ENCODE measurements at regions of chr16 and their contacts with region 1.

Region 1: DNA sequence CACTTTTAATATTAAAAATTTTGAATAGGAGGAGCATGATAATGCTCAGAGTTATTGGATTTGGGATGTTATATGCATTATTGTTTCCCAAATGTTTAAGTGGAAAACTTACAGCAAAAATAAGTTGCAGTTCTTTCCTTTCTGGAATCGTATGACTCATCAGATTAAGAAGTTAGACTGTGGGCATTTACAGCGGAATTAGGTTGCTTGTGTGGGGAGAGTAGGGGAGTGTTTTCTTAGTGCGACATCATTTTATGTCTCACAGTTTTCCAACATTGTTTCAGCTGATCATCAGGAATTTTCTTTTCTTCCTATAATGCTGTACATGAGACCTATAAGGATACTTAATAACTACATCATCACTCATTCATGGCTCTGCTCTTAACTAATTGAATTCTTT is 1631.8 kb downstream of the CDH8 start:
- DNase-seq: no peak
- H3K4me3 ChIP-seq: no peak overlapping the region
- H3K27ac ChIP-seq: no peak overlapping the region
- H3K4me1 ChIP-seq: no peaks in the 10 kb centered on the region
- H3K27me3 ChIP-seq: no peaks in the 10 kb centered on the region
- CTCF ChIP-seq: no peak
- EP300 ChIP-seq: no peak
- POLR2A ChIP-seq: no peak

Region 2: DNA sequence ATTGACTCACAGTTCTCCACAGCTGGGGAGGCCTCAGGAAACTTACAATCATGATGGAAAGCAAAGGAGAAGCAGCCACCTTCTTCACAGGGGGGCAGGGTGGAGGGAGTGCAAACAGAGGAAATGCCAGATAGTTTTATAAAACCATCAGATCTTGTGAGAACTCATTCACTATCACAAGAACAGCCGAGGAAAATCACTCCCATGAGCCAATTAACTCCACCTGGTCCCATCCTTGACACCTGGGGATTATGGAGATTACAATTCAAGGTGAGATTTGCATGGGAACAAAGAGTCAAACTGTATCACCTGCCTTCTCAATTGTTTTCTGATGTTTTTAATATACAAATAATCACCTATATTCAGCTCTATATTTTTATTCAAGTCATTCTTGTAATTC is 143.0 kb before region 1 on chr16:
- in situ Hi-C with region 1: no loop called
- intact Hi-C with region 1: no loop called
- DNase-seq: no peak
- H3K4me3 ChIP-seq: no peak overlapping the region
- H3K27ac ChIP-seq: no peak overlapping the region
- H3K4me1 ChIP-seq: no peaks in the 10 kb centered on the region
- H3K27me3 ChIP-seq: no peaks in the 10 kb centered on the region
- CTCF ChIP-seq: no peak
- EP300 ChIP-seq: no peak
- POLR2A ChIP-seq: no peak

Region 3: DNA sequence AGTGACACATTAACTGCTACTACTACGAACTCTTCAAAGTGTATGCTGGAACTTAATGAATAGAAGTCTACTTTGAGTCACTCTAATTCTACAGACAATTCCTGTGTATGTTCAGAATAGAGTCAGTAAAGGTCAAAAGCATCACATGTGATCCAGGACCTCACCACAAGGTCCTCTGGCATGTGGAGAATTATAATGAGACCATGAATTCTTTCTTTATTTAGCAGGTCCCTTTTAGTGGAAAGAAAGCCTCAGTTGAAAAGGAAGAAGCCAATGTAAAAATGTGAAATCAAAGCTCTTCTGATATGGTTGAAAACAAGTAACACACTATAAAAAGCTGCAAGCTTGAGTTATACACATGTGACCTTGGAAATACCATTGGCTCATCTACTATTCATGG is 58.1 kb before region 1 on chr16:
- in situ Hi-C with region 1: no loop called
- intact Hi-C with region 1: no loop called
- DNase-seq: no peak
- H3K4me3 ChIP-seq: no peak overlapping the region
- H3K27ac ChIP-seq: no peak overlapping the region
- H3K4me1 ChIP-seq: no peaks in the 10 kb centered on the region
- H3K27me3 ChIP-seq: no peaks in the 10 kb centered on the region
- CTCF ChIP-seq: no peak
- EP300 ChIP-seq: no peak
- POLR2A ChIP-seq: no peak

Region 4: GRCh38 chr16:60463986-60464385 is 59.6 kb after region 1 on chr16:
- in situ Hi-C with region 1: loop called in 1 of 4 experiments (anchors 10 kb)
- intact Hi-C with region 1: no loop called
- DNase-seq: no peak
- H3K4me3 ChIP-seq: no peak overlapping the region
- H3K27ac ChIP-seq: no peak overlapping the region
- H3K4me1 ChIP-seq: no peaks in the 10 kb centered on the region
- H3K27me3 ChIP-seq: no peaks in the 10 kb centered on the region
- CTCF ChIP-seq: no peak
- EP300 ChIP-seq: no peak
- POLR2A ChIP-seq: no peak

Region 5: DNA sequence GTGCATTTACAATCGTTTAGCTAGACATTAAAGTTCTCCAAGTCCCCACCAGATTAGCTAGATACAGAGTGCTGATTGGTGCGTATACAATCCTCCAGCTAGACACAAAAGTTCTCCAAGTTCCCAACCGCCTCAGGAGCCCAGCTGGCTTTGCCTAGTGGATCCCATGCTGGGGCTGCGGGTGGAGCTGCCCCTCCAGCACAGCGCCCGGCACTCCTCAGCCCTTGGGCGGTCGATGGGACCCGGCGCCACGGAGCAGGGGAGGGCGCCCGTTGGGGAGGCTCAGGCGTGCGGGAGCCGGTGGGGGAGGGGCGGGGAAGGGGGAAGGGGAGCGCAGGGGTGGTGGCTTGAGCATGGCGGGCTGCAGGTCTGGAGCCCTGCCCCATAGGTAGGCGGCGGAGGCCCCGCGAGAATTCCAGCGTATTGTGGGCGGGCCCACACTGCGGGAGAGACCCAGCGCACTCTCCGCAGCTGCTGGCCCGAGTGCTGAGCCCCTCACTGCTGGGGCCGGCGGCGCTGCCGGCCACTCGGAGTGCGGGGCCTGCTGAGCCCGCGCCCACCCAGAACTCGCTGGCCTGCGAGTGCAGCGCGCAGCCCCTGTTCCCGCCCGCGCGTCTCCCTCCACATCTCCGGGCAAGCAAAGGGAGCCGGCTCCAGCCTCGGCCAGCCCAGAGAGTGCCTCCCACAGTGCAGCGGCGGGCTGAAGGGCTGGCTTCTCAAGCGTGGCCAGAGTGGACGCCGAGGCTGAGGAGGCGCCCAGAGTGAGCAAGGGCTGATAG is 724.3 kb after region 1 on chr16:
- in situ Hi-C with region 1: no loop called
- intact Hi-C with region 1: no loop called
- DNase-seq: no peak
- H3K4me3 ChIP-seq: no peak overlapping the region
- H3K27ac ChIP-seq: no peak overlapping the region
- H3K4me1 ChIP-seq: no peaks in the 10 kb centered on the region
- H3K27me3 ChIP-seq: no peaks in the 10 kb centered on the region
- CTCF ChIP-seq: no peak
- EP300 ChIP-seq: no peak
- POLR2A ChIP-seq: no peak

Region 6: GRCh38 chr16:61382435-61382834 is 978.0 kb after region 1 on chr16:
- in situ Hi-C with region 1: no loop called
- intact Hi-C with region 1: no loop called
- DNase-seq: no peak
- H3K4me3 ChIP-seq: no peak overlapping the region
- H3K27ac ChIP-seq: no peak overlapping the region
- H3K4me1 ChIP-seq: no peaks in the 10 kb centered on the region
- H3K27me3 ChIP-seq: no peaks in the 10 kb centered on the region
- CTCF ChIP-seq: no peak
- EP300 ChIP-seq: no peak
- POLR2A ChIP-seq: no peak